ENCODE measurements at regions of chr11 and their contacts with region 1.

Region 1: GRCh38 chr11:102522312-102523188 is 8.0 kb downstream of the MMP7 start:
- DNase-seq: no peak
- ATAC-seq: no peak

Region 2: DNA sequence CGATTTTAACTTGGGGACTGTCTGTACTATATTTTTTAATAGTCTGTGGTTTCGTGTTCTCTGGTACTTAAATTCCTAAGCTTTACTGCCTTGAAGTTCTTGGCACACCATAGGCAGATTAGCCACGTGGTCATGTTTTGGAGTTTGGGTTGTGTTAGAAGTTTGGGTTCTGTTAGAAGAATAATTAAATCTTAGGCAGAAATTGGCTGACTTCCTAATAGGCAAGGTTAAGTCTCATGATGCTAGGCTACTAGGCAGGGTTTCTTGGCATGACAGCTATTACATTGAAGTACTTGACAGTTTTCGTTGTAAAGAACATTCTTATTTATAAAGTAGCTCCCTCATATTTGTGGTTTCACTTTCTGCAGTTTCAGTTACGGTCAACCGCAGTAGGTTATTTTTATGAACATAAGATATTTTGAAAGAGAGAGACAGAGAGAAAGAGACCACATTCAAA is 38.0 kb after region 1 on chr11:
- intact Hi-C with region 1: no loop called
- DNase-seq: no peak
- ATAC-seq: no peak

Region 3: DNA sequence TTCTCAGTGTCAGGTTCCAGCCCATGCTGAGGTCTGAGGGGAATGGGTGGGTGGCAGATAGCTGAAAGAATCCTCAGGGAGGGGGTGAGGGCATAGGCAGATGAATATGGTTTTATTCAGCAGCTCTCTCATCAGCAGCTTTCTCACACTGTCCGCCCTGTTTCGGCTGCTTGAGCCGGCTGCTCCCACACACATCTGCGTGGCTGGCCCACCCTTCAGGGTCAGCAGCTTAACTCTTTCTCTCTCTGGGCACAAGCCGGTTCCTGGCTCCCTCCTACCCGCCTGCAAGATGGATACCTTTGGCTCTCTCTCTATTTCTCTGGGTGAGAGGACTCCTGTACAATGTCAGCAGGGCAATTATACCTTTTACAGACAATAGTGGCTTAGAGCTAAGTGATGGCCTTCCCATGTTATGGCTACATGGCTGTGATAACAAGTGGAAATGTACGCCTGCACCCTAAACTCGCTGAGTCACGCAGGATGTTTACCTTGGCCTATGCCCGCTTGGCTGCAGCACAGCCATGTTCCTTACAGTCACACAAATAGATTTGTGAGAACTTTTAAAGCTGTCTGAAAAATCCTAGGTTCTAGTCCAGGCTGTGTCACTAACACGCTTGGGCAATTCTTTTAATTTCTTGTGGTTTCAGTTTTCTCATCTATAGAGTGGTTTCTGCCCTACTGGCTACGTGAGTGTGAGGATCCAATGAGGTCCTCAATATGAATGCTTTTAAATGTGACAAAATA is 98.4 kb after region 1 on chr11:
- intact Hi-C with region 1: loop called in 1 of 2 experiments (anchors 10 kb)
- DNase-seq: peak; percentile 52
- ATAC-seq: peak in 1 of 2 donors; percentile 84

Region 4: DNA sequence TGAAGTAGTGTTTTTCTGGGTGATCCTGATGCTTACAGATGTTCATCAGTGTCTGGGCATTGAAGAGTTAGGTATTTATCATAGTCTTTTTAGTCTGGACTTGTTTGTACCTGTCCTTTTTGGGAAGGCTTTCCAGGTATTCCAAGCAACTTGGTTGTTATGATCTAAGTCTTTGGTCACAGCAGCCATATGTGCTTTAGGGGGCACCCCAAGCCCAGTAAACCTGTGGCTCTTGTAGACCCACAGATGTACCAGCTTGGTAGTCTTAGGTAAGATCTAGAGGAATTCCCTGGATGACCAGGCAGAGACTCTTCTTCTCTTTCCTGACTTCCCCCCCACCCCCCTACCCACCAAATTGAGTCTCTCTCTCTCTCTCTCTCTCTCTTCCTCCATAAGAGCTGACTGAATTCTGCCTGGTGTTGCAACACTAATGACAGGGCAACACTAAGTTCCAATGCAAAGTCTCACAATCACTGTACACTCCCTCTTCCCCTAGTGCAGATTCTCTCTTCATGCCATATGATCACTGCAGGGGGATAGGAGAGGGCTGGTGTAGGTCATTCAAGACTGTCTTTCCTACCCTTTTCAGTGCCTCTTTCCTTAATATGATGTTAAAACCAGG is 226.7 kb after region 1 on chr11:
- intact Hi-C with region 1: no loop called
- DNase-seq: no peak
- ATAC-seq: no peak